Thyroid gland (tissue), 4 donors: ENCODE measurements at regions of chr17 and their contacts with region 1.

Region 1: GRCh38 chr17:28644985-28645939 is at the start of gene BLTP2:
- DNase-seq: peak; percentile 96 to 97
- H3K4me3 ChIP-seq: peak within 1 kb of the TSS; percentile 13 to 93 (median 77)
- H3K27ac ChIP-seq: peak within 1 kb of the TSS; percentile 86 to 89 (median 88)
- H3K4me1 ChIP-seq: peaks cover 19 to 28% of the 10 kb centered on the region in 2 donors
- H3K27me3 ChIP-seq: no peaks in the 10 kb centered on the region
- CTCF ChIP-seq: peak in 2 of 6 experiments; percentile 22 to 25
- POLR2A ChIP-seq: peak in 1 of 2 donors; percentile 86
- total RNA-seq, gene BLTP2: 96.5 to 153 (median 129) TPM

Region 2: DNA sequence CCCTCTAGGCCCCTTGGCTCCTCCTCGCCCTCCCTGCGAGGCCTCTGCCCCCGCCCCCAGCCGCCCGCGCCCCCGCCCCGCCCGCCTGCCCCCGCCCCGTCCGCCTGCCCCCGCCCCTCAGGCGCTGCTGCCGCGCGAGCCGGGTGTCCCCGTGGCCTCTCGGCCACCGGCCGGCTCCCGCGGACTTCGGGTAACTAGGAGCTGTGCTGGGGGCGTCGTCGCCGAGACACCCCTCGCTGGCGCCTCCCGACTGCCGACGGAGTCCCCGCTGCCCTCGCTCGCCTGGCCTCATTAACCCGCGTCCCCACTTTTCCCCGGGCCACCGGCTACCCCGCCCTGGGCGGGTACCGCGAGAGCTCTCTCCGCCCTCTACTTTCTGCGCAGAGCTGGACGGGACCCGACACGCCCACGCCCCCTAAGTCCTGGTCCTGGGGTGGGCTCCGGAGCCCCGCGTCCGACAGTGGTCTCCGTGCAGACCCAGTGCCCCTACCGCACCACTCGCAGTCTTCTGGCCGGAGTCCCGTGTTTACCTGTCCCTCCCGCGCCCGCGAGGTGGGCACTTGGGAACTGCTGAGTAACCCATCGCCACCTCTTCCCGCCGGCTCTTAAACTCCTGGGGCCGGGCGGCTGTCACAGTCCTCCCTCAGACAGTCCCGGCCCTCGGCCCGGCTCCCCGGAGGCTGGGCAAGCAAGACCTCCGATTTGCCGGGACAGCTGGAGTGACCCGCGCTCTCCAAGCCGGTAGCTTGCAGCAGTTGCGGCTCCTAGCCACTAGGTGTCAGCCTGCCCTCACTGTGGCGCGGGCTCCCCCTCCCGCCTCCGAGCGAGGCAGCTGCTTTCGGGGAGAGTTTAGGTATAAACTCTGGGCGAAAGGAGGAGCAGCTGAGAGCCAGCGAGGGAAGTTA is 81.2 kb after region 1 on chr17 and contains the start of gene TLCD1:
- intact Hi-C with region 1: loop called (anchors 5 kb)
- DNase-seq: peak; percentile 96
- H3K4me3 ChIP-seq: peak within 1 kb of the TSS in 2 of 3 donors; percentile 34 to 55
- H3K27ac ChIP-seq: peak within 1 kb of the TSS; percentile 92 to 98 (median 94)
- H3K4me1 ChIP-seq: peaks cover 19 to 20% of the 10 kb centered on the region in 2 donors
- H3K27me3 ChIP-seq: no peaks in the 10 kb centered on the region
- CTCF ChIP-seq: peak in 5 of 6 experiments; percentile 99 to 100 (median 100)
- POLR2A ChIP-seq: no peak
- total RNA-seq, gene TLCD1: 1.6 to 21.4 (median 5.1) TPM